ENCODE measurements at regions of chr12 and their contacts with region 1.

Region 1: DNA sequence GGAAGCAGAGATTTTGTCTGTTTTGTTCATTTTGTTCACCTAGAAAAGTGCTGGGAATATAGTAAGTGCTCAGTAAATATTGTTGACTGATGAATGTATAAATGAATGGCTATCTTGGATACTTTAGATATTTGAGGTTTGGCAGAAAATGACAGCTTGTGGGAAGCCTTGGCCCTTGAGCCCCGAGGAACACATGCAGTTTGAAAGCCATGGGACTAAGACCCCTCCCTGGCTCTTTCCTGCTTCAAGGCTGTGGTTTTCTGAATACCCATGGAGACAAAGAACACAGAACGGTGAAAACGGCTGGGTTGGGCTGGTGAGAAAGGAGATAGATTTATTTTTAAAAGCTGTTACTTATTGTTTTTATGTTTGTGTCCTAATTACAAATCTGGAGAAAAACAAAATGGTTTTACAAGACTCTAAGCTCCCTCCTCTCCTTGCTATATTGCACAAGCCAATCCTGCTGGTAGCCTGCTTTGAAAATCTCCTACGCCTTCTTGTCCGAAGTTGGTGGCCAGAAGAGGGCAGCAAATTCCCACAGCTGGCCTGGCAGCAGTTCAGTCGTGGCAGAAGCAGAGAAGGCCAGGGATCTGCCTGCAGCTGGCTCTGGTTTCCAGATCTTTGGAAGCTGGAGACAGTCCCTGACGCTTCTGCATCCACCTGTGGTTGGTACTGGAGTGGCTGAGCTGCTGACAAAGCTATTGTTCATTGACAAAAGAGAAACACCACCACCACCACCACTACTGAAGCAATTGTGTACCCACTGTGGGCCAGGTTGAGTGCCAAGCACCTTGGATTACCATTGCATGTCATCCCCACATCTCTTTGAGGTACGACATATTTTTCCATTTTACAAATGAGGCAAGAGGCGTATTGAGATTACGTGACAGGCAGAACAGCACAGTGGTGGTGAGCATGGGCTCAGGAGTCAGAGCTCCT is 5.2 kb upstream of the KRT85 start:
- DNase-seq: peak; percentile 73
- H3K4me3 ChIP-seq: no peak overlapping the region
- H3K27ac ChIP-seq: no peak overlapping the region
- H3K4me1 ChIP-seq: no peaks in the 10 kb centered on the region
- H3K27me3 ChIP-seq: peaks cover 13 to 19% of the 10 kb centered on the region in 2 experiments
- CTCF ChIP-seq: peak; percentile 69 to 77
- POLR2A ChIP-seq: no peak

Region 2: GRCh38 chr12:52351196-52352059 is 21.1 kb before region 1 on chr12:
- CTCF ChIA-PET with region 1: no interaction called
- POLR2A ChIA-PET with region 1: no interaction called
- dilution Hi-C with region 1: no loop called
- intact Hi-C with region 1: no loop called
- DNase-seq: no peak
- H3K4me3 ChIP-seq: no peak overlapping the region
- H3K27ac ChIP-seq: no peak overlapping the region
- H3K4me1 ChIP-seq: no peaks in the 10 kb centered on the region
- H3K27me3 ChIP-seq: peaks cover 12 to 19% of the 10 kb centered on the region in 2 experiments
- CTCF ChIP-seq: no peak
- POLR2A ChIP-seq: no peak

Region 3: DNA sequence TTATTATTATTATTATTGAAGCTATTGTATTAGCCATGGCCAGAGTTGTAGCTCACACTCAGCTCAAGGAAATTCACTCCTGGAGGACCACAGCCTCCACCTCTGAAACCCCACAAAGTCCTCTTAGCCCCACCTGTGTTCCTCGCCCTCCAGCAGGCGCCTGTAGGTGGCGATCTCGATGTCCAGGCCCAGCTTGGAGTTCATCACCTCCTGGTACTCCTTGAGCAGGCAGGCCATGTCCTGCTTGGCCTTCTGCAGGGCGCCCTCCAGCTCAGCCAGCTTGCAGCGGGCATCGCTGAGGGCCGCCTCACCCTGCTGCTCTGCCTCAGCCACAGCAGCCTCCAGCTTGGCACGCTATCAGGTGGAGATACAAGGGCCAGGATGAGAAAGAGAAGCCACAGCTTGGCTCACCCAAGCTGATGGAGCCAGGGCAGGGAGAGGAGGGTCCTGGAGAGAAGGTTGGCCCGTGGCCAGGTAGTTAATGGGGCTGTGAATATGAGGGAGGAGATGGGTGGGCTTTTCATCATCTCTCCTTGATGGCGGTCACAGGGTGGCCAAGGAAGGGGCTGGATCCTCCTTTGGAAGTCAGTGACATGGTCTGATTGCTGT is 10.3 kb before region 1 on chr12:
- CTCF ChIA-PET with region 1: interaction called, 12 read pairs
- POLR2A ChIA-PET with region 1: no interaction called
- dilution Hi-C with region 1: no loop called
- intact Hi-C with region 1: no loop called
- DNase-seq: no peak
- H3K4me3 ChIP-seq: no peak overlapping the region
- H3K27ac ChIP-seq: no peak overlapping the region
- H3K4me1 ChIP-seq: no peaks in the 10 kb centered on the region
- H3K27me3 ChIP-seq: peaks cover 0 to 2% of the 10 kb centered on the region in 2 experiments
- CTCF ChIP-seq: peak; percentile 19 to 28
- POLR2A ChIP-seq: no peak

Region 4: GRCh38 chr12:52398176-52398829 is 25.8 kb after region 1 on chr12:
- CTCF ChIA-PET with region 1: no interaction called
- POLR2A ChIA-PET with region 1: no interaction called
- dilution Hi-C with region 1: no loop called
- intact Hi-C with region 1: no loop called
- DNase-seq: no peak
- H3K4me3 ChIP-seq: no peak overlapping the region
- H3K27ac ChIP-seq: no peak overlapping the region
- H3K4me1 ChIP-seq: no peaks in the 10 kb centered on the region
- H3K27me3 ChIP-seq: peaks cover 0 to 2% of the 10 kb centered on the region in 2 experiments
- CTCF ChIP-seq: no peak
- POLR2A ChIP-seq: no peak